ENCODE measurements at regions of chr5 and their contacts with region 1.

Region 1: GRCh38 chr5:104751969-104752368 is 1189.4 kb upstream of the NUDT12 start:
- DNase-seq: no peak
- H3K4me3 ChIP-seq: no peak overlapping the region
- H3K27ac ChIP-seq: no peak overlapping the region
- H3K4me1 ChIP-seq: no peaks in the 10 kb centered on the region
- H3K27me3 ChIP-seq: no peaks in the 10 kb centered on the region
- CTCF ChIP-seq: no peak
- POLR2A ChIP-seq: no peak

Region 2: GRCh38 chr5:104763216-104763615 is 11.2 kb after region 1 on chr5:
- CTCF ChIA-PET with region 1: interaction called, 10 read pairs
- POLR2A ChIA-PET with region 1: no interaction called
- dilution Hi-C with region 1: no loop called
- intact Hi-C with region 1: no loop called
- DNase-seq: no peak
- H3K4me3 ChIP-seq: no peak overlapping the region
- H3K27ac ChIP-seq: no peak overlapping the region
- H3K4me1 ChIP-seq: no peaks in the 10 kb centered on the region
- H3K27me3 ChIP-seq: no peaks in the 10 kb centered on the region
- CTCF ChIP-seq: no peak
- POLR2A ChIP-seq: no peak